Activated CD8-positive, alpha-beta T cell treated with anti-CD3 and anti-CD28 coated beads, Interleukin-2, amount 10 ng/mL, durations not matched to agents 7 days and 5 days (primary cell): ENCODE measurements at regions of chr12 and their contacts with region 1.

Region 1: DNA sequence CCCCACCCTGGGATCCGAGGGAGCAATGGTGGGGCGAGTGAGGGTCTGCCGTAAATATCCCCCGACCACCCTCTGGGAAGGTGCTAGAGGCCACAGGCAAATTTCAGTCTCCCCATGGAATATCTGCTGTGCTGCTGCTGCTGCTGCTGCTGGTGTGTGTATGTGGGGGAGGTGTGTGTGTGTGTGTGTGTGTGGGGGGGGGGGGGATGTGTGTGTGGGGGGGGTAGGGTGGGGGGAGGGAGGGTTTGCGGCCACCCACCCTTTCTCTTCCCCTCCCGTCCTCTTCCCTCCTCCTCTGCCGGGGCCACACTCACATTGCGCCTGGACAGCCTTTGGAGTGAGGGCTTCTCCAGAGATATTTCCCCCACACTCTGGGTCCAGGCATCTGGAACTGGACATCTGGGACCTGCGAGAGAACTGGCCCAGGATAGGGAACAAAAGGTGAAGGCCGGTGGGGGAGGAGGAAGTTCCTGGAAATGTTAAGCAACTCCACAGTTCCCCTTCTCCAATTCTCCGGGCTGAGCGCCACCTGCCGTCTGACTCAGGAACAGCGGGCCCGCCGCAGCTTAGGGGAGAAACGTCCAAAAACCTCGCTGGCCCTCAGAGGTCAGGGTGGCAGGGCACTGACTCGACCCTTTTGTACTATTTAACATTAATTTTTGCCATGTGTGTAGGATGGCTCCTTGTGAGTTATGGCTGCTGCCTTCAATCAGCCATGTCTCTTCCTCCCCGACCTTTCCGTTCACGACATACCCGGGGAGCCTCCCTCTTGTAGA is at the start of gene C1RL:
- DNase-seq: peak; percentile 85
- ATAC-seq: peak; percentile 27
- H3K4me3 Mint-ChIP-seq: peak within 1 kb of the TSS; percentile 95
- H3K27ac Mint-ChIP-seq: peak within 1 kb of the TSS; percentile 92
- H3K4me1 Mint-ChIP-seq: peaks cover 58% of the 10 kb centered on the region
- H3K27me3 Mint-ChIP-seq: no peaks in the 10 kb centered on the region
- total RNA-seq, gene C1RL: 21.5 to 23.3 TPM

Region 2: DNA sequence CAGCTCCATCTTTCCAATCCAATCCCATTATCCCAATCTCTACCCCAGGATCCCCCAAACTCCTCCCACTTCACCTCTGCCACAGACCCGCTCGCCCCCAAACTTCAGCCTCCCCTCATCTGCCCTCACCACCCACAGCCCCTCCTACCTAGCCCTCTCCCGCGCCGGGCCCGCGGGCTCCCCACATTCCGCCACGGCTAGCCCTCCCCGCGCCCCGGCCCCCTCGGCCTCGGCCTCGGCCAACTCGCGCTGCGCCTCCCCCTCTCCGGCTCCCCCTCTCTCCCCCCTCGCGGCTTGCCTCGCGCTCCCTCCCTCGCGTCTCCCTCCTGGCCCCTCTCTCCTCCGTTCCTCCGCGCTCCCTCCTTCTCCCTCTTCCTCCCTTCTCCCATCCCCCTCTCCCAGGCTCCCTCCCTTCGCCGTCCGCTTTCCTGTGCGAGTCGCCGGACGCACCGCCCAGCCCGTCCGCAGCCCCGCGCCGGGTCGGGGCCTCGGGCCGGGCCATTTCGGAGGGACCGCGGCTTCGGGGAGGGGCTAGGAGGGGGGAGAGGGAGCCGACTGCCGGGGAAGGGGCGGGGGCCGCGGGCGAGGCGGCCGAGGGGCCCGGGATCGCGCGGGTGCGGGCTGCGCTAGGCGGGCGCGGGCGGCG is 181.5 kb before region 1 on chr12 and contains the start of gene ATN1:
- CTCF ChIA-PET with region 1: interaction called, 31 read pairs
- POLR2A ChIA-PET with region 1: interaction called, 3 read pairs
- DNase-seq: peak; percentile 51
- ATAC-seq: peak; percentile 34
- H3K4me3 Mint-ChIP-seq: peak within 1 kb of the TSS; percentile 78
- H3K27ac Mint-ChIP-seq: peak within 1 kb of the TSS; percentile 53
- H3K4me1 Mint-ChIP-seq: peaks cover 68% of the 10 kb centered on the region
- H3K27me3 Mint-ChIP-seq: no peaks in the 10 kb centered on the region
- total RNA-seq, gene ATN1: 21.6 to 24.5 TPM

Region 3: DNA sequence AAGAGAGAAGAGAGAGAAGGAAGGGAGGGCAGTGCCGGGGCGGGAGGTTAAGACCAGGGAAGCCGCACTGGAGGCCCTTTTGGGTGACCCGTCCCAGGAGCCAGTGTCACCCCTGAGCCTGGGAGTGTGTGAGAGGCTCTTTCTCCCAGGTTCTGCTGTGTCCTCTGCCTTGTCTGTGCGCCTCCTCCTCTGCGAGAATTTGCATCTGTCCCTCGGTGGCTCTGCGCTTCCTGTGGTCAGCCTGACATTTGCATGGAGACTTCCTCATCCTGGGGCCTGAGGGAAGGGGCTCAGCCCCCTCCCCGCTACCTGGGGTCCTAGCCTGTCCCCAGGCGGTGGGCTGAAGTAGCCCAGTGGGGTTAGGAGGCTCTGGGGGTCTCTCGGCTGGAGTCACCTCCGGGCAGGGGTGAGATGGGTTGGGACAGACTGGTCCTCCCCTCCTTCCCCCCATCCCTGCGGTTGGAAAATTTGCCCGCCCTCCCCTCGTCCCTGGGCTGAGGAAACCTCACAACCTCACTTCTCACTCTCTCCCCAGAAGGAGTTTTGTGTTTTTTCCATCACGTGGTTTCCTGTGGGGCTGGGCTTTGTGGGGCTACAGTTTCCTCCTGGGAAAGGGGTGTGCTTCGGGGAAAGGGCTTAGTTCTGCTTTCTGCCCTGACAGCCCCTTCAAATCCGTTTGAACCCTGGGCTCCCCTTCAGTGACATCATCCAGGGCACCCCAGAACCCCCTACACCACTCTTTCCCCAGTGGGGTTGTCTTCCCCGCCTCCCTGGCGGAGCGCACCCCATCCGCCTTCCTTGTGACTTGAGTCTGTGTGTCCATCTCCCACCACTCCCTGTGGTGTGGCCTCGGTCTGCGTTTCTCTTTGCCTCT is 155.3 kb before region 1 on chr12:
- CTCF ChIA-PET with region 1: interaction called, 7 read pairs
- POLR2A ChIA-PET with region 1: interaction called, 15 read pairs
- DNase-seq: peak; percentile 91
- ATAC-seq: peak; percentile 40
- H3K4me3 Mint-ChIP-seq: peak overlapping the region; percentile 99
- H3K27ac Mint-ChIP-seq: peak overlapping the region; percentile 98
- H3K4me1 Mint-ChIP-seq: peaks cover 71% of the 10 kb centered on the region
- H3K27me3 Mint-ChIP-seq: no peaks in the 10 kb centered on the region

Region 4: GRCh38 chr12:6978609-6979011 is 130.4 kb before region 1 on chr12:
- CTCF ChIA-PET with region 1: interaction called, 11 read pairs
- POLR2A ChIA-PET with region 1: interaction called, 4 read pairs
- DNase-seq: no peak
- ATAC-seq: no peak
- H3K4me3 Mint-ChIP-seq: no peak overlapping the region
- H3K27ac Mint-ChIP-seq: no peak overlapping the region
- H3K4me1 Mint-ChIP-seq: peaks cover 22% of the 10 kb centered on the region
- H3K27me3 Mint-ChIP-seq: no peaks in the 10 kb centered on the region

Region 5: DNA sequence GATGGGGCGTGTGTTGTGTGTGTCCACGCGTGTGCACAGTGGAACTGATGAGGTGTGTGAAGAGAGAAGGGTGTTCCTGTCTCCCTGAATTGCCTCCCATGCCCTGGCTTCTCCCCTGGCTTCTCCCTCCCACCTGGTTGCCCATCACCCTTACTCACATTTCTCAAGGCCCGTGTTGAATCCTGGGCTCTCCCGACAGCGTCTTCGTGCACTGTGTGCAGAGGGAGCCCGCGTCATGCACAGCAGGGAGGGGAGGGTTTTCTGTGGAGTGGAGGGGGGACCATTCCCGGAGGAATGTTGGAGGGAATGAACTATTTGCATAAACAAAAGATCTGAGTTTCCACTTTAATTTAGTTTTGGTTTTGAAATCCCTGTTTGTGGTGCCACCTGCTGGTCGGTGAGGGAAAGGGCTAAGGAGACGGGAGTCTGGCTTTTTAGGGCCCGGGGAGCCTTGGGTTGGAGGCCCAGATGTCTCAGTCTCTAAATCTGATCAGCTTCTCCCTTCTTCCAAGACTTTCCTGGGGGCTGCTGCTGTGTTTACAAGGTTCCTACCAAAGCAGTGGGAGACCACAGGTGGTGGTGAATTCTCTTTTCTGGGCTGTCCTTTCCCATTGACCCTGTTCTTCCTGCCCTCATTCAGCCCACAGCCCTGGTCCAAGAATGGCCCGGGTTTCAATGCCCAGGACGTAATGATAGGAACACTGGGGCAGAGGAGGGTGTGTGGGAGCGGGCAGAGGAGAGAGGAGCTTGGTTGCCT is 16.6 kb before region 1 on chr12 and contains the start of gene C1R:
- CTCF ChIA-PET with region 1: interaction called, 13 read pairs
- POLR2A ChIA-PET with region 1: interaction called, 5 read pairs
- DNase-seq: peak; percentile 81
- ATAC-seq: peak; percentile 71
- H3K4me3 Mint-ChIP-seq: peak within 1 kb of the TSS; percentile 80
- H3K27ac Mint-ChIP-seq: peak within 1 kb of the TSS; percentile 80
- H3K4me1 Mint-ChIP-seq: peaks cover 12% of the 10 kb centered on the region
- H3K27me3 Mint-ChIP-seq: peaks cover 5% of the 10 kb centered on the region
- total RNA-seq, gene C1R: 3.6 to 3.7 TPM

Region 6: GRCh38 chr12:7221486-7221885 is 112.5 kb after region 1 on chr12:
- CTCF ChIA-PET with region 1: no interaction called
- POLR2A ChIA-PET with region 1: no interaction called
- DNase-seq: no peak
- ATAC-seq: no peak
- H3K4me3 Mint-ChIP-seq: no peak overlapping the region
- H3K27ac Mint-ChIP-seq: no peak overlapping the region
- H3K4me1 Mint-ChIP-seq: no peaks in the 10 kb centered on the region
- H3K27me3 Mint-ChIP-seq: no peaks in the 10 kb centered on the region